Colonic mucosa (tissue), 4 donors: ENCODE measurements at regions of chrX and their contacts with region 1.

Region 1: DNA sequence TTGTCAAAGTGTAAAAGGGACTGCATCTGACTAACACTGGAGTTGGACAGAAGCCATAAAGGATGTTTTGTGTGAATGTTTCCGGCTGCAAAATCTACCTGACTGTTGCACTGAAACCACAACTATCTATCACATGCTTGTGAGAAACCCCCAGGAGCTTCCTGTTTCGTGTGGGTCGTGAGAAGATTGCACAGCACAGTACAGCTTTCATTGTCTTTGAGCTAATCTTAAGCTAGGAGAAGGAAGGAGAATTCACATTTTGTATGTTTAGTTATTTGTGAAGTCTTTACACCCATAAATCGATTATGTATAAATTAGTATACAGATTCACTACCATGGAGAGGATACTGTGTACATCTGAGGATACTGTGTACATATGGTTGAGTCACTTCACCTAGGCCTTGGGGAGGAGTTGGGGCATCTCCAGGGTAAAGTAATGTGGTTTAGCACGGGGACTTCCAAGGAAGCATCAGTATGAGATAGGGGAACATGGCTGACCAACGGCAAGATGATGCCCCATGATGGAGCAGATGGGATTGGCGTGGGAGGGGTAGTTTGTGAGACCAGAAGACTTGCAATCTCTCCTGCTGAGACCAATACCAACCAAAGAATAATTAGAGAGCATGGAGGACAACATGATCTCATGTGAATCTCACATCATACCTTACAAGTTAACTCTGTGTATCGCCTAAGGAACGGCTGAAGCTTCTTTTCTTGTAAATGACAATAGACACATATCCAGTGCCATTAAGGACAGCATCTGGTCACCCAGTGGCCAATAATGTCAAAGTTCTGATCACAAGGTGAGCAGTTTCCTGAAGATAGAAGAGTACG is 43.1 kb upstream of the FAM9C start:
- DNase-seq: no peak
- H3K4me3 ChIP-seq: no peak overlapping the region
- H3K27ac ChIP-seq: peak overlapping the region; percentile 16
- H3K4me1 ChIP-seq: no peaks in the 10 kb centered on the region
- H3K27me3 ChIP-seq: no peaks in the 10 kb centered on the region
- CTCF ChIP-seq: no peak

Region 2: DNA sequence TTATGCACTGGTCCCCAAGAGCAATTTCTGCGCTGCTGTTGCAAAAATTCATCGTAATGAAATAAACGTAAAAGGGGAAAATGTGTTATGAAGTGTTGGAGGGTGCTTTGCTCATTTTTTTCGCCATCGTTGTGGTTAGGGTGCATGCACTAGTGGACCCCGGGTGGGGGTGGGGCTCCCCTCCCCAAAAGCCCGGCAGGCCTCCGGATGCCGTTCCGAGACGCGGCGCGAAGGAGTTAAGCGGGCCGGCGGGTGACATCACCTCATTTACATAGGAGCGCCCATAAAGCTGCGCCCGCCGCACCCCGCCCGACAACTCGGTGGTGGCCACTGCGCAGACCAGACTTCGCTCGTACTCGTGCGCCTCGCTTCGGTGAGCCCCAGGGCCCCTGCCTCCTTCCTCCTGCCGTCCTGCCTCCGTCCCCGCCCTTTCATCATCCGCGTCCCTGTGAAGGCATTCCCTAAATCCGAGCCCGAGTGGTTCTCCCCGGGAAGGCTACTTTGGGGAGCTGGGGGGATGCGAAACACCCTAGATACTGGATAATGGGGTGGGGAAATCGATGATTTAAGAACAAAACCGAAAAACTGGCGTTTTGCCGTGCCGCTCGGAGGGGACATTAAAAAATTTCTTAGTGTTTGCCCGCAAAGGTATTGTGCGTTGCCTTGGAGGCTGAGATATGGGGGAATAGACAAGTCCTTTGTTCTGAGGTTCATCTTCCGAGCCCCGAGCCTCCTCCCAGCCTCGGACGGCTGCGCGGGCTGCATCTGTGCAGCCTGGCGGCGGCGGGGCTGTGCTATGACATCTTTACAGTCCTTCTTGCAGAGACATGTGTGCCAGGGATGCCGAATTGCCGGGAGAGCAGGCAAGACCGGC is 112.5 kb before region 1 on chrX and contains the start of gene TMSB4X:
- intact Hi-C with region 1: loop called (anchors 10 kb)
- DNase-seq: peak; percentile 90
- H3K4me3 ChIP-seq: peak within 1 kb of the TSS; percentile 61
- H3K27ac ChIP-seq: peak within 1 kb of the TSS; percentile 92
- H3K4me1 ChIP-seq: no peaks in the 10 kb centered on the region
- H3K27me3 ChIP-seq: no peaks in the 10 kb centered on the region
- CTCF ChIP-seq: no peak
- total RNA-seq, gene TMSB4X: 3,844 to 4,288 TPM

Region 3: GRCh38 chrX:13487731-13488523 is 400.4 kb after region 1 on chrX:
- intact Hi-C with region 1: loop called (anchors 10 kb)
- DNase-seq: peak; percentile 70
- H3K4me3 ChIP-seq: no peak overlapping the region
- H3K27ac ChIP-seq: peak overlapping the region; percentile 65
- H3K4me1 ChIP-seq: no peaks in the 10 kb centered on the region
- H3K27me3 ChIP-seq: no peaks in the 10 kb centered on the region
- CTCF ChIP-seq: peak; percentile 45